MCF 10A (cell line): ENCODE measurements at regions of chr3 and their contacts with region 1.

Region 1: GRCh38 chr3:185796431-185797107 is 28.3 kb downstream of the IGF2BP2 start:
- DNase-seq: peak; percentile 95
- H3K4me3 Mint-ChIP-seq: peak overlapping the region; percentile 12
- H3K27ac Mint-ChIP-seq: peak overlapping the region; percentile 91
- H3K4me1 Mint-ChIP-seq: peaks cover 34% of the 10 kb centered on the region
- H3K27me3 Mint-ChIP-seq: no peaks in the 10 kb centered on the region
- CTCF ChIP-seq: no peak

Region 2: DNA sequence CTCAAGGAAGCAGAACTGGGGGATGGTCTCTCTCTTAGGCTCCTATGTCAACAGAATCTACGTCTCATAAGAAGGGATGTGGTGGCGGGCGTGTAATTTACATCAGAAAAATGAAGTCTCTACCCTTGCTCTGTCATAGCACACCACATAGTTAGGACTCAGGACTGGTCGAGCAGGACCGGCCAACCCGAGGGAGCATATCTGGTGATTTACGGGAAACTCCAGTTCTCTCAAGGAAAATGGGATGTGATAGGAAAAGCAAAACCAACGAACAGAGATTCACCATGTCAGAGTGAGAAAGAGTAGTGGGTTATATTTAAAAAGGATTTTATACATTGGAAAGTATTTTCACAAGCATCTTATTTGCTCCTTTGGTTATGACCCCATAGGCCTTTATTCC is 26.5 kb before region 1 on chr3:
- CTCF ChIA-PET with region 1: interaction called, 17 read pairs
- POLR2A ChIA-PET with region 1: interaction called, 4 read pairs
- intact Hi-C with region 1: no loop called
- DNase-seq: no peak
- H3K4me3 Mint-ChIP-seq: no peak overlapping the region
- H3K27ac Mint-ChIP-seq: no peak overlapping the region
- H3K4me1 Mint-ChIP-seq: peaks cover 33% of the 10 kb centered on the region
- H3K27me3 Mint-ChIP-seq: no peaks in the 10 kb centered on the region
- CTCF ChIP-seq: no peak

Region 3: GRCh38 chr3:185813691-185814215 is 17.2 kb after region 1 on chr3:
- CTCF ChIA-PET with region 1: interaction called, 4 read pairs
- POLR2A ChIA-PET with region 1: interaction called, 13 read pairs
- intact Hi-C with region 1: no loop called
- DNase-seq: peak; percentile 73
- H3K4me3 Mint-ChIP-seq: peak overlapping the region; percentile 39
- H3K27ac Mint-ChIP-seq: peak overlapping the region; percentile 85
- H3K4me1 Mint-ChIP-seq: peaks cover 39% of the 10 kb centered on the region
- H3K27me3 Mint-ChIP-seq: no peaks in the 10 kb centered on the region
- CTCF ChIP-seq: no peak